GM12878 (cell line): ENCODE measurements at regions of chr7 and their contacts with region 1.

Region 1: DNA sequence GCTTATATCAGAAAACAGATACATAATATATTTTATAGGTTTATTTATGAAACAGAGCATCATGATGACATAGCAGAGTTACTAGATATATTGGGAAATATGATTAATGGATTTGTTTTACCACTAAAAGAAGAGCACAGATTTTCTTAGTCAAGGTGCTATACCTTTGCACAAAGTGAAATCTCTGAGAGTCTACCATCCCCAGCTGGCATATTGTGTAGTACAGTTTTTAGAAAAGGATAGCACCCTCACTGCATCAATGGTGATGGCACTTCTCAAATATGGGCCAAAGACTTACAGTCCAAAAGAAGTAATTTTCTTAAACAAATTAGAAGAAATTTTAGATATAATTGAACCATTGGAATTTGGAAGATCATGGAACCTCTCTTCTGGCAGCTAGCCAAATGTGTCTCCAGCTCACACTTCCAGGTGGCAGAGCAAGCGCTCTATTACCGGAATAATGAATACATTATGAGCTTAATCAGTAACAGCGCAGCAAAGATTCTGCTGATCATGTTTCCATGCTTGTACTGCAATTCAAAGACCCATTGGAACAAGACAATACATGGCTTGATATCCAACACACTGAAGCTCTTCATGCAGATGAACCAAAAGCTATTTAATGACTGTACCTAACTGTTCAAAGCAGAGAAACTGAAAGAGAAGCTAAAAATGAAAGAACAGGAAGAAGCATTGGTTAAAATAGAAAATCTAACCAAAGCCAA is 21.9 kb upstream of the CREB3L2 start:
- DNase-seq: peak; percentile 61
- ATAC-seq: peak; percentile 90
- H3K4me3 ChIP-seq: peak overlapping the region; percentile 25; the same call in 1 of the 2 replicates
- H3K27ac ChIP-seq: peak overlapping the region; percentile 79
- H3K4me1 ChIP-seq: peaks cover 51% of the 10 kb centered on the region
- H3K27me3 ChIP-seq: no peaks in the 10 kb centered on the region
- CTCF ChIP-seq: no peak
- EP300 ChIP-seq: no peak
- POLR2A ChIP-seq: no peak
- RAD21 ChIP-seq: no peak

Region 2: GRCh38 chr7:137992550-137993394 is 31.0 kb before region 1 on chr7:
- CTCF ChIA-PET with region 1: no interaction called
- POLR2A ChIA-PET with region 1: interaction called, 10 read pairs
- RAD21 ChIA-PET with region 1: no interaction called
- SMC1A ChIA-PET with region 1: interaction called, 45 read pairs
- in situ Hi-C with region 1: no loop called
- intact Hi-C with region 1: no loop called
- DNase-seq: no peak
- ATAC-seq: peak; percentile 76
- H3K4me3 ChIP-seq: peak overlapping the region; percentile 26; the same call in 1 of the 2 replicates
- H3K27ac ChIP-seq: peak overlapping the region; percentile 43
- H3K4me1 ChIP-seq: peaks cover 55% of the 10 kb centered on the region
- H3K27me3 ChIP-seq: no peaks in the 10 kb centered on the region
- CTCF ChIP-seq: no peak
- EP300 ChIP-seq: peak; percentile 6 to 70; a peak in 2 of 4 replicates
- POLR2A ChIP-seq: no peak
- RAD21 ChIP-seq: no peak

Region 3: DNA sequence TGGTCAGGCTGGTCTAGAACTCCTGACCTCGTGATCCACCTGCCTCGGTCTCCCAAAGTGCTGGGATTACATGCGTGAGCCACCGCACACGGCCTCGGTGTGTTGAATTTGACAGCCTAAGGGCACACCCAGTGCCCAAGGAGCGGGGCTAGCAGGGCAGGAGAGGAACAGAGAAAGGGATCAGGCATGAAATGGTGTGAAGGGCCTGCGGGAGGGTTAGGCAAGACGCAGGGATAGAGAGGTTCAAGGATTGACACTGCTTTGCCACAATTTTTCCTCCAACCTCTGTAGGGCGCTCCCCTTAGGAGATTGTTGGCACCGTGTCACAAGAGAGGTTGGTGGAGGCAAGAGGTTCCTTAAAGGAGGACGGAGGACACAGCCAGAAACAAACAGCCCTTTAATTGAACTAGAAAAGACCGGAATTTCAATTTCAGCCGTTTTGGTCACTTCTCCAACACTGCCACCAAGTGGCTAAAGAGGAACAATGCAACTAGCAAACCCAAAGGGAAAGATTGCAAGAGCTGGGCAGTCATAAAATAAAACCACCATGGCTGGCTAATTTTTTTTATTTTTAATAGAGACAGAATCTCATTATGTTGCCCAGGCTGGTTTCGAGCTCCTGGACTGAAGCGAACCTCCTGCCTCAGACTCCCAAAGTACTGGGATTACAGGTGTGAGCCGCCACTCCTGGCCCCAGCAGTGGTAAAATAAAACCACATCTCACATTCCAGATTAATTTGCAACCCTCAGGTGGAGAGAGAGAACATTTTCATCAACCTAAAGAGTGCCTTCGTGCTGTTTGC is 15.0 kb before region 1 on chr7:
- CTCF ChIA-PET with region 1: interaction called, 44 read pairs
- POLR2A ChIA-PET with region 1: interaction called, 4 read pairs
- RAD21 ChIA-PET with region 1: interaction called, 15 read pairs
- SMC1A ChIA-PET with region 1: interaction called, 45 read pairs
- in situ Hi-C with region 1: no loop called
- intact Hi-C with region 1: no loop called
- DNase-seq: no peak
- ATAC-seq: peak; percentile 86
- H3K4me3 ChIP-seq: no peak overlapping the region
- H3K27ac ChIP-seq: no peak overlapping the region
- H3K4me1 ChIP-seq: no peaks in the 10 kb centered on the region
- H3K27me3 ChIP-seq: no peaks in the 10 kb centered on the region
- CTCF ChIP-seq: peak; percentile 80 to 84 (median 80)
- EP300 ChIP-seq: no peak; a peak in 1 of 4 replicates
- POLR2A ChIP-seq: no peak
- RAD21 ChIP-seq: peak; percentile 100

Region 4: DNA sequence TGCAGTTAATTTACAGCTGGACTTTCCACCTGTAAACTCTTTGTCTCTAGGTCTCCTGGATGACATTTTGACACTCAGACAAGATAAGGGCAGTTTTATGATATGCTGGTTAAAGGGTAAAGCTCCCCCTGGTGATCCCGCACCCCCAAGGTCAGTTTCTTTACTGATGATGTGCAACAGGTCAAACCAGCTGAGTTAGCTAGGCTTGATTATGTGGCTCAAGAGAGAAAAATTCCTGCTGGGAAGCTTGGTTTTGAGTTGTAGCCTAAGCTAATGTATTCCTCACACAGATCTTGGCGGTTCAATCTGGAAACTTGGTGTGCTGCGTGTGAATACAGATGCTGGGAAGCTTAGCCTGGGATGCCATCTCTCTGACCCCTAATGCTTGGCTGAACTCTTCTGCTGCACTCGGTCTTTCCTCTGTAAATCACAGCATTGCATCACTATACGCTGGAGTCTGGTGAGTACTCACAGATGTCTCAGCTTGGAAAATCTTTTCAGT is 41.1 kb after region 1 on chr7:
- CTCF ChIA-PET with region 1: no interaction called
- POLR2A ChIA-PET with region 1: no interaction called
- RAD21 ChIA-PET with region 1: interaction called, 7 read pairs
- SMC1A ChIA-PET with region 1: interaction called, 12 read pairs
- in situ Hi-C with region 1: no loop called
- intact Hi-C with region 1: no loop called
- DNase-seq: no peak
- ATAC-seq: no peak
- H3K4me3 ChIP-seq: no peak overlapping the region
- H3K27ac ChIP-seq: no peak overlapping the region
- H3K4me1 ChIP-seq: no peaks in the 10 kb centered on the region
- H3K27me3 ChIP-seq: no peaks in the 10 kb centered on the region
- CTCF ChIP-seq: no peak
- EP300 ChIP-seq: no peak
- POLR2A ChIP-seq: no peak
- RAD21 ChIP-seq: no peak

Region 5: GRCh38 chr7:138459413-138460175 is 435.8 kb after region 1 on chr7:
- CTCF ChIA-PET with region 1: no interaction called
- POLR2A ChIA-PET with region 1: no interaction called
- RAD21 ChIA-PET with region 1: no interaction called
- SMC1A ChIA-PET with region 1: no interaction called
- in situ Hi-C with region 1: no loop called
- intact Hi-C with region 1: loop called (anchors 5 kb)
- DNase-seq: peak; percentile 92
- ATAC-seq: peak; percentile 89
- H3K4me3 ChIP-seq: peak overlapping the region; percentile 48; the same call in 1 of the 2 replicates
- H3K27ac ChIP-seq: peak overlapping the region; percentile 55
- H3K4me1 ChIP-seq: no peaks in the 10 kb centered on the region
- H3K27me3 ChIP-seq: no peaks in the 10 kb centered on the region
- CTCF ChIP-seq: peak in 2 of 3 experiments; percentile 4 to 23; a peak in 1 of 6 replicates
- EP300 ChIP-seq: no peak
- POLR2A ChIP-seq: no peak
- RAD21 ChIP-seq: 0 out of 2 replicates have a peak, but pooled peaks have one; percentile 1

Region 6: DNA sequence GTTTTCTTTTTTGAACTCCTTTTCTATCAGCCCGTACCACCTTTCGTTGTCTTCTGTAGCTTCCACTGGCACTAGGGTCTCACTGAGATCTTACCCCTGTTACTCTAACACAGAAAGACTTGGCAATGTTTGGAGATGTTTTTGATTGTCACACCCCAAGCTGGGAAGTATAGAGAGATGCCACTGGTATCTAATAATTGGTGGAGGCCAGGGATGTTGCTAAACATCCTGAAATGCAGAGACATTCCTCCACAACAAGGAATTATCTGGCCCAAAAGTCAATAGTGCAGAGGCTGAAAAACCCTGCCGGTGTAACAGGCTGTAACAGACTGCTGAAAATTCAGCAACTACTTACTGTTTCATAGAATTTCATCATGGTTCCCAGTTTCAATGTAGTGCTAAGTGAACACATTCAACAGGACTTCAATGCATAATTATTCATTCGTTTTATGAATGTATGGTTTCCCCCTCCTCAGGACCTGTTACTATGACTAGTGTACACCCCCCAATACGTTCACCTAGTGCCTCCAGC is 552.2 kb after region 1 on chr7:
- CTCF ChIA-PET with region 1: no interaction called
- POLR2A ChIA-PET with region 1: no interaction called
- RAD21 ChIA-PET with region 1: no interaction called
- SMC1A ChIA-PET with region 1: no interaction called
- in situ Hi-C with region 1: no loop called
- intact Hi-C with region 1: no loop called
- DNase-seq: no peak
- ATAC-seq: no peak
- H3K4me3 ChIP-seq: no peak overlapping the region
- H3K27ac ChIP-seq: no peak overlapping the region
- H3K4me1 ChIP-seq: no peaks in the 10 kb centered on the region
- H3K27me3 ChIP-seq: no peaks in the 10 kb centered on the region
- CTCF ChIP-seq: no peak
- EP300 ChIP-seq: no peak
- POLR2A ChIP-seq: no peak
- RAD21 ChIP-seq: no peak